Naive thymus-derived CD8-positive, alpha-beta T cell (primary cell): ENCODE measurements at regions of chr1 and their contacts with region 1.

Region 1: DNA sequence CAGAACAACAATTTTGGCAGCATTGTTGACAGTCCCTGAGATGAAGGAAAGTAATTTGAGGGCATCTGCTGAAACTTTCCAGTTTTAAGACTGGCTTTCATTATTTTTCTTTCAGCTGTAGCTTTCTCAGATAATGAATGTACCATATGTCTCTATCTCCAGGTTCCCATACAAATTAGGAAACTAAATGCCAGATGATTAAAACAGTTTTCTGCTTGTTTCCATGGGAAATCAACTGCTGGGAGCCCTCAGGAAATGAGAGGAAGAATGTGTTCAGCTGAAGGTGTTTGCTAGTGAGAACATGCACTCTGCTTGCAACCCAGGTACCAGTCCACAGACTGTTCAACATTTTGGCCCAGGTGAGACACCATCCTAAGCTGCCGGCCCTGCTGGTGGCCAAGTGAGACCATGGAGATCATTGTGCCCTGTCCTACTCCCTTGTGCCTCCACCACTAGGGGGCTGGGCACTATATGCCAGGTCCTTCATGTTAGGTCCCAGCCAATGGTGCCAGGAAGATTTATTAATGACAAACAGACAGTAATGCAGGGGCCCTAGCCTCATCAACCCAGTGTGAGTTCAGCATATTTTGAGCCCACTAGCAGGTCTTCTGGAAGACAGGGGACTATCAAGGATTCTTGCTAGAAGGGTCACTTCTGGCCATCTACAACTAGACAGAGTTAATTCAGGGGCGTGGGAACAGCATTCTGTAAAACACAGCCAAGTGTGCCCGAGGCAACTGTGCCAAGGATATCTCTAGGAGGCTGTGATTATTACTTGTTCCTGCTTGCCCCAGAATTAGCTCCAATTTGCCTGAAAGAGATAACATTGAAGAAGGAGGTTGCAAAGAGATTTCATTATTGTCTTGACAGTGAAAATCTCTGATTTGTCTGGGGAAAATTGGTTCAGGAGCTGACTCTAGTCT is 17.0 kb upstream of the LRRC8C start:
- DNase-seq: no peak
- ATAC-seq: no peak
- H3K4me3 Mint-ChIP-seq: no peak overlapping the region
- H3K27ac Mint-ChIP-seq: peak overlapping the region in 8 of 10 donors; percentile 38 to 74 (median 58)
- H3K4me1 Mint-ChIP-seq: peaks cover 30 to 81% (median 70%) of the 10 kb centered on the region in 4 donors
- H3K27me3 Mint-ChIP-seq: no peaks in the 10 kb centered on the region

Region 2: DNA sequence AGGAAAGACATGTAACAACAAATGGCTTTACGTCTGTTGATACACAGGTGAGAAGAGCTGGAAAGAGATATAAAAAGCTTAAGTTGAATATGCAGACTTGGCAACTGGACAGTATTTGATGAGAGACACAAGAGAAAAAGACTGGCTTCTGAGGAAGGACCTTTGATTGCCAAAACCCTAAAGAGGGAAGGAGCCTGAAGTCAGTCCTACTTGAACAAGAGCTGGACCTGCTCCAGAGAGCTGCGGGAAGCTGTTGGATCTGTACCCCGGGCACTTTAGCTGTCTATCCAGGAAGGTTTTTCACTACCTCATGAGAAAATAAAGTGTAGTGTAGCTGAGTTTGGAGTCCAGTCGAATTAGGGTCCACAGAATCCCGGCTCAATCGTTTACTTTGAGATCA is 116.6 kb before region 1 on chr1:
- POLR2A ChIA-PET with region 1: no interaction called
- DNase-seq: no peak
- ATAC-seq: no peak
- H3K4me3 Mint-ChIP-seq: no peak overlapping the region
- H3K27ac Mint-ChIP-seq: no peak overlapping the region
- H3K4me1 Mint-ChIP-seq: no peaks in the 10 kb centered on the region
- H3K27me3 Mint-ChIP-seq: no peaks in the 10 kb centered on the region

Region 3: DNA sequence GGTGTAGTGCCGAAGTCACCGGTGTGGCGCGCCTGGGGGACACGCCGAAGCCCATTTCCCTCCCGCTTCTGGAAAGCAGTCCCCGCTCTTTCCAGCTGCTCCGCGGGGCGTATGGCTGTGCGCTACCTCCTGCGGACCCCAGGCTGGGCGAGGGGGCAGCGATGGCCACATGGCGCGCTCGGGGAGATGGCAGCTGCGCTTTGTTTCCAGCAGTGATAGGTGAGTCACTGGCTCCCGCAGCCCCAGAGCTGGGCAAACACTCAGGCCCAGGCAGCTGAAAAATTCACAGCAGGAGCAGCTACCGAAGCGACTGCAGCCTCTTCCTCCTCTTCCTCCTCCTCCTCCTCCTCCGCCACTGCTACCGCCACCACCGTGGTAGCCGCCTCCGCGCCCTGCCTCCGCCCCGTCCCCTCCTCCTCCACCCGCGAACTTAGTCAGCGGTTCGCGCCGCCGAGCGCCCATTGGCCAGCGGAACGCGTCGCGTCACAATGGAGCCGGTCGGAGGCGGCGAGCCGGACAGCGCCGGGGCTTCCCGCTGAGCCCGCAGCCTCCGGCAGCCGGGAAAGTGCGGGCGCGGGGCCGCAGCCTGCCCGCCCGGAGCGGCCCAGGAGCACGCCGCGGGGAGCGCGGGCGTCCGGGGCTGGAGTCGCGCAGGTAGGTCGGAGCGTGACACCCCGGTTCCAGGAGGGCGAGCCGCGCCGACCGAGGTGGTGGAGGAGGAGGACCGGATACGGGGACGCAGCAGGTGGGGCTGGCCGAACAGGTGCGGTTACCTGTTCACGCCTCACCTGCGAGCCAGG is 91.4 kb before region 1 on chr1 and contains the start of gene LRRC8B:
- POLR2A ChIA-PET with region 1: interaction called, 62 read pairs
- DNase-seq: peak; percentile 74 to 90 (median 85)
- ATAC-seq: peak; percentile 85 to 86
- H3K4me3 Mint-ChIP-seq: peak within 1 kb of the TSS in 5 of 10 donors; percentile 81 to 99 (median 92)
- H3K27ac Mint-ChIP-seq: peak within 1 kb of the TSS; percentile 88 to 96 (median 94)
- H3K4me1 Mint-ChIP-seq: peaks cover 7 to 19% (median 14%) of the 10 kb centered on the region in 4 donors
- H3K27me3 Mint-ChIP-seq: no peaks in the 10 kb centered on the region
- polyA plus RNA-seq, gene LRRC8B: 8.5 to 13.6 (median 12.2) TPM

Region 4: DNA sequence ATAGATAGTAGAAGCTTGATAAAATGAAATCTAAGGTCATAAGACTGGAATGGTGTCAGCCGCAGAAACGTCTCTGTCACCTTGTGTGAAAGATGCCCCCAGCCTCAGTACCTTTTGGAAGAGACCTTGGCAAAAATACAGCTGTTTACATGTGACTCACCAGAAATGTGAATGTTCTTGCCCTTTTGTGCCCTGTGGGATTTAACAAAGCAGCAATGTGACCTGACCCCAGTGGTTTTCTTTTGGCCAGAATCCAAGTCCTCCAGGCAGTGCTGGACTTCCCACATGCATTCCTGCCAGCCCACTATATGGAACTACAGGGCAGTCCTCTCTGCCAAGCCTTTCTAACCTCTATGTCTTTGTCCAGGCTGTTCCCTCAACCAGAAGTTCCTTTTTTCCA is 10.2 kb before region 1 on chr1:
- POLR2A ChIA-PET with region 1: interaction called, 125 read pairs
- DNase-seq: no peak
- ATAC-seq: no peak
- H3K4me3 Mint-ChIP-seq: peak overlapping the region in 9 of 10 donors; percentile 1 to 91 (median 69)
- H3K27ac Mint-ChIP-seq: peak overlapping the region; percentile 94 to 100 (median 99)
- H3K4me1 Mint-ChIP-seq: peaks cover 38 to 96% (median 94%) of the 10 kb centered on the region in 4 donors
- H3K27me3 Mint-ChIP-seq: no peaks in the 10 kb centered on the region

Region 5: GRCh38 chr1:89657886-89658285 is 41.9 kb after region 1 on chr1:
- POLR2A ChIA-PET with region 1: interaction called, 36 read pairs
- DNase-seq: peak in 8 of 10 donors; percentile 27 to 85 (median 64)
- ATAC-seq: peak; percentile 85 to 93
- H3K4me3 Mint-ChIP-seq: peak overlapping the region; percentile 22 to 79 (median 56)
- H3K27ac Mint-ChIP-seq: peak overlapping the region; percentile 74 to 96 (median 92)
- H3K4me1 Mint-ChIP-seq: peaks cover 44 to 94% (median 85%) of the 10 kb centered on the region in 4 donors
- H3K27me3 Mint-ChIP-seq: no peaks in the 10 kb centered on the region

Region 6: DNA sequence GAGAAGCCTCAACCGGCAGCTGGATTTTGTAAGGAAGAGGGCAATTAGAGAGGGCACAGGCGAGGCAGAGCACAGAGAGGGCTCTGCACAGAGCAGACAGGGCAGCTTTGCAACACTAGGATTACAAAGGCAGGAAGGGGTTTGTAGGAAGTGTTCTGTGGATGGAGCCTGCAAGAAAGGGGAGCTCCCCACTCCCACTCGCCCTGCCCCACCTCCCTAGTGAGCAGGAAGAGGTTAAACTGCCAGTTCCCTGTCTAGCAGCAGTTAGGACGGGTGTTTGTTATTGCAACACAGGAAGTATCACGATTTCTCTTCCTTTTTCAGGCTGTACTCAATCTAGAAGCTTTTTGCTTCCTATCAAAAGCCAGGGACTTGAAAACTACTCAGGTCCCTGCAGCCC is 141.6 kb after region 1 on chr1:
- POLR2A ChIA-PET with region 1: interaction called, 60 read pairs
- DNase-seq: peak in 6 of 10 donors; percentile 15 to 56 (median 42)
- ATAC-seq: peak; percentile 60 to 74
- H3K4me3 Mint-ChIP-seq: peak overlapping the region; percentile 65 to 86 (median 82)
- H3K27ac Mint-ChIP-seq: peak overlapping the region; percentile 84 to 99 (median 94)
- H3K4me1 Mint-ChIP-seq: peaks cover 47 to 90% (median 85%) of the 10 kb centered on the region in 4 donors
- H3K27me3 Mint-ChIP-seq: no peaks in the 10 kb centered on the region

Region 7: DNA sequence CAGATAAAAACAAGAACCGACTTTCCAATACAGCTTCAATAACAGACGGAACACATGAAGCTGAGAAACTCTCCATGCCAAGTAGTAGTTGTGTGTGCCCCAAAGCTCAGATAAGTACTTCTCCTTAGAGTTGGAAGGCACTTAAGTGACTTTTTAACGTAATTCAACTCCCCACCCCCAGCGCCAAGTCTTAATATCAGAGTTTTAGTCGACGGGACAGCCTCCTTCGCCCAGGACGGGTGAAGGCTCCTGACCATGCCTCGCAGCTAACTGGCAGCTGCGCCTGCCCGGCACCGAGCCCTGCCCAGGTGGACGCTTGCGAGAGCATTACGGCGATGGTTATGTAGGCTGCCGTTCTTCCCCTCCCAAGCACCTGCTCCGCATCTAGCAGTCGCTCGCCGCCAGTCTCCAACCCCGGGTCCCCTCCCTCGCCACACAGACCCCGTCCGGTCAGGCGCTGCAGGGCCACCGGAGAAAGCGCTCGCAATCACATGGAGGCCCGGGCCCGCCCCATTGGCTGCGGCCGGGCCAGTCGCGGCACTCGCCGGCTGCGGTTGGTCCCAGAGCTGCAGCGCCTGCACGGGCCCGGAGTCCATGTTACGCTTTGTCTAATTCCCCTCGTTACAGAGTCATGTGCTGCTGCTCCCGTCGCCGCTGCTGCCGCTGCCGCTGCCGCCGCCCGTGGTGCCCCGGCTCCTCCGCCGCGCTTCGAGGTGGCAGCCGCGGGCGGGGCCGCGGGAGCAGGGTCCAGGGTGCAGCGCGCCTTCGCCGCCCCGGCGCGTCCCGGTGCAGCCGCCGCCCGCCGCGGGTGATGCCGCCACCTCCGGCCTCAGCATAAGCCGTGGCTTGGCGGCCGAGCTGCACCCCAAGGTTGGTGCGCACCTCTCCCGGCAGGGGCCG is 204.7 kb after region 1 on chr1 and contains the start of gene LRRC8D:
- POLR2A ChIA-PET with region 1: interaction called, 14 read pairs
- DNase-seq: peak; percentile 46 to 80 (median 58)
- ATAC-seq: peak; percentile 64 to 71
- H3K4me3 Mint-ChIP-seq: peak within 1 kb of the TSS; percentile 85 to 96 (median 92)
- H3K27ac Mint-ChIP-seq: peak within 1 kb of the TSS; percentile 82 to 97 (median 92)
- H3K4me1 Mint-ChIP-seq: peaks cover 29 to 62% (median 52%) of the 10 kb centered on the region in 4 donors
- H3K27me3 Mint-ChIP-seq: no peaks in the 10 kb centered on the region
- polyA plus RNA-seq, gene LRRC8D: 42.3 to 60.0 (median 46.0) TPM